Dendritic cell treated with granulocyte-macrophage colony-stimulating factor and Interleukin-4, amounts not matched to agents 40 ng/mL and 50 ng/mL, for 4 days (primary cell): ENCODE measurements at regions of chr22 and their contacts with region 1.

Region 1: DNA sequence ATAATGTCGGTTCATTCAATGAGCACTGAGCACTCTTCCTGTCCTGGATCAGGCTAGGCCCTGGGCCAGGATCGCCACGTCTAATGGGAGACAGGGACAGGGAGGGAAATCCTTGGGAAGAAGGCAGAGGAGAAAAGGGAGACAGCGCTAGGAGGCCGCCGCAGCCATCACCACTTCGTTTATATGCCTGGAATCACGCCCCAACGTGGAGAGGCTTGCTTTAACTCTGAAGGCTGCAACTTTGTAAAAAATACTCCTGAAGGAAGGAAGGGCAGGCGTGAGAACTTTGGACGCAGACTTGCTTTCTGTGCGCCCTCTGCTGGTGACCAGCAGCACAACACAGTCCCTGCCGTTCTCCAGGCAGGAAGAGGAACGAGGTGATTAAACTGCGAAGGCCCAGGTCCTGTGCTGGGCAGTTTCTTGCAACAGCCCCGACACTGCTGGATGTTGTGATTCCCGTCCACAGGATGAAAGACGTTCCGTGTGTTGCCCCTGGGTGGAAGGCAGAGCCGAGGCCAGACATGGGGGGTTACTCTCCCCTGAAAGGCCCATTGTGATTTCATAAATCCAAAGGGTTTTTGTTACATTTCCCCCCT is 22.1 kb downstream of the RIBC2 start:
- H3K4me3 Mint-ChIP-seq: no peak overlapping the region
- H3K27ac Mint-ChIP-seq: peak overlapping the region; percentile 47
- H3K4me1 Mint-ChIP-seq: peaks cover 41% of the 10 kb centered on the region
- H3K27me3 Mint-ChIP-seq: peaks cover 11% of the 10 kb centered on the region

Region 2: DNA sequence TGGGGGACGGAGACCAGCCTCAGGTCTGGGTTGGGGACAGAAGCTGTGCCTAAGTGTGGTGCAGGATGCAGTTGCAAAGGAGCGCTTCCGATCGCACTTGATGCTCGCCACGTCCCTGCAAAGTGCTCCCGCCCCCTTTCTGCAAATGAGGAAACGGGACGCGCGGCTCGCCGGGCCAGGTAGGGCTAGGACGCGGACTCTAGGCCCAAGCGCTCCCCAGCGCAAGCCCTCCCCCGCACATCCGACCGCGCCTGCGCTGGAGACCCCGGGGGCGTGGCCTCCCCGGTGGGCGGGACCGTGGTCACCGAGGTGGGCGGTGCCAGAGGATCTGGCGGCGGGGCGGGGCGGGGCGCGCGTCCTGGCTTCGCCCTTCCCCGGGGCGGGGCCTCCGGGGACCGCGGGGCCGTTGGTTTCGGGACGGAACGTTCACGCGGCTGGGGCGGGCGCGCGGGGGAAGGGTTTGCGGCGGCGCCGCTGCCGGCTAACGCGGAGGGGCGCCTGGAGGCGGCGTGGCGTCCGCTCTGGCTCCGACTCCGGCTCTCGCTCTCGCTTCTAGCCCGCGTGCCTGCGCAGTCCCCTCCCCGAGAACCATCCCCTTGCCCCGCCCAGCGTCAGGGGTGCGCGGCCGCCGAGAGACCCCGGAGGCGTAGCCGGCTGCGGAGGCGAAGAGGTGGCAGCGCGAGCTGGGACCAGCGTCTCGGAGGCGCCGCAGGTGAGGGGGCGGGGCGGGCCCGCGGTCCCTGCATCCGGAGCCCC is 126.0 kb before region 1 on chr22 and contains the start of gene FAM118A:
- intact Hi-C with region 1: loop called (anchors 10 kb)
- H3K4me3 Mint-ChIP-seq: peak within 1 kb of the TSS; percentile 91
- H3K27ac Mint-ChIP-seq: peak within 1 kb of the TSS; percentile 87
- H3K4me1 Mint-ChIP-seq: peaks cover 84% of the 10 kb centered on the region
- H3K27me3 Mint-ChIP-seq: no peaks in the 10 kb centered on the region

Region 3: GRCh38 chr22:45413368-45414211 is 22.1 kb before region 1 on chr22 and contains the starts of genes RIBC2 and SMC1B:
- intact Hi-C with region 1: loop called (anchors 1 kb)
- H3K4me3 Mint-ChIP-seq: peak within 1 kb of the TSS; percentile 81
- H3K27ac Mint-ChIP-seq: peak within 1 kb of the TSS; percentile 78
- H3K4me1 Mint-ChIP-seq: peaks cover 16% of the 10 kb centered on the region
- H3K27me3 Mint-ChIP-seq: peaks cover 7% of the 10 kb centered on the region